Right ventricle myocardium inferior (tissue), 1 donor: ENCODE measurements at regions of chr11 and their contacts with region 1.

Region 1: GRCh38 chr11:44911029-44911814 is 39.5 kb downstream of the TP53I11 start:
- DNase-seq: peak; percentile 75
- ATAC-seq: peak; percentile 74

Region 2: DNA sequence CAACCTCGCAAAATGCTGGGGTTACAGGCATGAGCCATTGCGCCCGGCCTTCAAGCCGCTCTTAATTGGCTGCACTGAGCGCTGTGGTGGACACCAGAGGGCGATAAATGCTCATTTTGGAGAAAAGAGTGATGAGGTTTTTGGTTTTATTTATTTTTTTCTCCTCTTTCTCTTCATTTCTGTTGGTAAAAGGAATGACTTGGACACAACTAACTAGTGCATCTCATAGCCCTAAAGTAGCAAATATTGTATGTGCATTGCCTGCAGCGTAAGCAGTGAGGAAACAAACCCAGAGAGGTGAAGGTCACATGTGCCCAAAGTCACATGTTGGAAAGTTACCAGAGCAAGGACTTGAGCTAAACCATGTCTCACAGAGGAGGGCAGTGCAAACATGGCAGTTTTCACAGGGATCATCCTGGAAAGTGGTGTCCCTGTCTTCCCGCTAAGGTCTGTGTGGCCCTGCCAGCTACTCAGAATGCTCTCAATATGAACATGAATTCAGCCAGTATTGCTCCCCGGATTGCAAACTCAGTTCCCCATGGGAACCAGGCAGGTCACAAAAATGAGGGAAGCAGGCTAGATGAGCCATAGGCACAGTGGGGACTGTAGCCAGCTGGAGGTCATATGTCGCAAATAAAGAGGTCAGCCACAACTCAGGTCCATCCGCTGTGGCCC is 354.4 kb before region 1 on chr11:
- intact Hi-C with region 1: loop called (anchors 5 kb)
- DNase-seq: peak; percentile 88
- ATAC-seq: peak; percentile 70